Dendritic cell treated with granulocyte-macrophage colony-stimulating factor and Interleukin-4, amounts not matched to agents 40 ng/mL and 50 ng/mL, for 4 days (primary cell): ENCODE measurements at regions of chr3 and their contacts with region 1.

Region 1: GRCh38 chr3:113745273-113746068 is 578 bp downstream of the NAA50 start:
- H3K4me3 Mint-ChIP-seq: peak overlapping the region; percentile 85
- H3K27ac Mint-ChIP-seq: peak overlapping the region; percentile 100
- H3K4me1 Mint-ChIP-seq: peaks cover 59% of the 10 kb centered on the region
- H3K27me3 Mint-ChIP-seq: no peaks in the 10 kb centered on the region

Region 2: DNA sequence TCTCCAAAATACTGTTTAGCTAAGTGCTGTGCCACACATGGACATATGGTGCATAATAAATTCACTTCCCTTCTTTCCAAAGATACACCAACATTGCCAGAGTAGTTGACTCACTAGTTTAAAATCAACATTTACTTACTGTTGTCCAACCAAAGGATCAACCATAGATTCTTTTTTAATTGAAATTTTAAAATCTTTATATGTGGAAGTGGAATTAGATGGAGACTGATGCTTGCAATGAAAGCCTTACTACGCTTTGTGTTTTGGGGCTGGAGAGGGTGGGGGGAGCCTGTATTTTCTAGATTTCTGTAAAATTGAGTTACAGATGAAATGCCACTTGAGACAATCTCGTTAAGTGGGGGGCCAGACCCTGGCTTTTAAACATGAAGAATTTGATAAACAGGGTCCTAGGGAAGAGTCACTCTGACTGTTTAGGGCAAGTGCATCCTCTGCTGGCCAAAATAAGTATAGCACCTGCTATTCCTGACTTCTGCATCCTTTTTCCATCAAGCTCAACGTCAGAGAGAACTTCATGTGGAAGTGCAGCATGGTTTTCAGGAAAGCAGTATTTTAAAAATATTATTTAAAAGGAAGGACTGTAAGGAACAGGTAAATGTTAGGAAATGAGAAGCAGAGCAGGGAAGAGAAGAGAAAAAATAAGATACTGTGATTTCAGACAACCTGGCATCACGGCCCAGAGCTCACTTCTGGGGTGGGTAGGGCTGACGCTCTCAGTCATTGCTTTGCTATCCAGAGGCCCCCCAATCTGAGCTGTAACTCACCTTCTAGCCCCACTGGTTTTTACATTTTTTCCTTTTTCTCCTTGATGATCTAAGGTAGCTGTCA is 457.4 kb before region 1 on chr3:
- intact Hi-C with region 1: loop called (anchors 5 kb)
- H3K4me3 Mint-ChIP-seq: no peak overlapping the region
- H3K27ac Mint-ChIP-seq: no peak overlapping the region
- H3K4me1 Mint-ChIP-seq: peaks cover 8% of the 10 kb centered on the region
- H3K27me3 Mint-ChIP-seq: no peaks in the 10 kb centered on the region

Region 3: DNA sequence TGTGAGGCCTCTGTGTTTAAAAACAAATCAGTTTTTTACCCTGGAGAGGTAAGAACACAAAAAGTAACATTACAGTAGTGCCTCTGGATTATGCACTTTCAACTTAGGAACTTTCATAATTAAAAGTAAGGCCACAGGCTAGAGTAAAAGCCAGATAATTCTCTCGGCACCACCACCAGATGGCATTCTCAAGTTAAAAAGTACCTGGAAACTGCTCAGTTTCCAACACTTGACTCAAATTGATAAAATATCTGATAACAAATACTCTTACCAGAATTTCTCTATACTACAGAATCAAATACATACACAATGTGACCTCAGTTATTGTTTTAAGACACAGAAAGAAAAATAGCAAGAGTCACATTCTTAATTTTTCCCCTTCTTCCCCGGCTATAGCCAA is 250.4 kb before region 1 on chr3:
- intact Hi-C with region 1: loop called (anchors 2 kb)
- H3K4me3 Mint-ChIP-seq: no peak overlapping the region
- H3K27ac Mint-ChIP-seq: no peak overlapping the region
- H3K4me1 Mint-ChIP-seq: no peaks in the 10 kb centered on the region
- H3K27me3 Mint-ChIP-seq: no peaks in the 10 kb centered on the region

Region 4: DNA sequence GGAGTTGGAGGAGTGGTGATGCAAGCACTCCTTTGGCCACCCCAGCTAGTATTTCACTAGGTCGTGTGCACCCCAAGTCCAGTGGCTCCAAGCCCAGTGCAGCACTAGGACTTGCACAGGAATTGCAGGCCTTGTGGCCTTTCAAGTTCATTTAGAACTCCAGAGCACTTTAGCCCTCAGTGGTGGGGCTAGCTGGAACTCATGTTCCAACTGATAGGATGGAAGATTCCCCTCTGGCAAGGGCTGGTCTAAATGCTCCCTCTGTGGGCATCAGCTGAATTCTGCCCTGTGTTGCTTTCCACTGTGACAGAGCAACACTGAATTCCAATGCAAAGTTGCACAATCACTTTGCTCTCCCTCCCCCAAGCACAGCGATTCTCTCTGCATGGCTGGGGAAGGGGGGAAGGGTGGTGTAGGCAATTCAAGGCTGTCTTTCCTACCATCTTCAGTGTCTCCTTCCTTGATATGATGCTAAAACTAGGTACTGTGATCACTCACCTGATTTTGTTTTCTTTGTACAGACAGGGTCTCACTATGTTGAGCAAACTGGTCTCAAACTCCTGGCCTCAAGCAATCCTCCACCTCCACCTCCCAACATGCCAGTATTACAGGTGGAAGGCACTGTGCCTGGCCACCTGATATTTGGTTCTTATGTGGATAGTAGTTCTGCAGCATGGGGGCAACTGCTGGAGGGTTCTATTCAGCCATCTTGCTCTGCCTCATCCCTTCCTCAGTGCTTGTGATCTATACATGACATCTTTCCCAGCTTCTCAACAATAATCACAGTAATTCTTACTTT is 59.3 kb before region 1 on chr3:
- intact Hi-C with region 1: no loop called
- H3K4me3 Mint-ChIP-seq: no peak overlapping the region
- H3K27ac Mint-ChIP-seq: no peak overlapping the region
- H3K4me1 Mint-ChIP-seq: peaks cover 31% of the 10 kb centered on the region
- H3K27me3 Mint-ChIP-seq: no peaks in the 10 kb centered on the region

Region 5: GRCh38 chr3:113696658-113697499 is 48.6 kb before region 1 on chr3:
- intact Hi-C with region 1: loop called (anchors 1 kb)
- H3K4me3 Mint-ChIP-seq: no peak overlapping the region
- H3K27ac Mint-ChIP-seq: no peak overlapping the region
- H3K4me1 Mint-ChIP-seq: peaks cover 33% of the 10 kb centered on the region
- H3K27me3 Mint-ChIP-seq: peaks cover 8% of the 10 kb centered on the region

Region 6: DNA sequence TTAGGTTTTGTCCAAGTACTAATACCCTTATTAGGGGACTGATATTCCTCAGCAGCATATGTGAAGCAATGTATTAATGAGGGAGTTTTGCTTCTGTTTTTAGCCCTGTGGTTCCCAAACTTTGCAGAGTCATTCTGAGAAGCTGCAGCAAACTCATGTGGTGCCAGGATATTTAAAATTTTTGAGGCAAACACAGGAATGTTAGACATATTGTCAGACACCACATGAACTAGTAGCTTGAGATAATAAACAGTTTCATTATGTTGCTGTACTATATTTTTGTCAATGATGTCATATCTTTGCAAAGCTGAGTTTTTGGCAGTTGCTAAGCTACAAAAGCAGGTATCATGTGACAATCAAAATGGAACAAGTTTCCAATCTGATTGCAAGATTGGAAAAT is 38.0 kb after region 1 on chr3:
- intact Hi-C with region 1: loop called (anchors 1 kb)
- H3K4me3 Mint-ChIP-seq: no peak overlapping the region
- H3K27ac Mint-ChIP-seq: peak overlapping the region; percentile 67
- H3K4me1 Mint-ChIP-seq: no peaks in the 10 kb centered on the region
- H3K27me3 Mint-ChIP-seq: no peaks in the 10 kb centered on the region

Region 7: DNA sequence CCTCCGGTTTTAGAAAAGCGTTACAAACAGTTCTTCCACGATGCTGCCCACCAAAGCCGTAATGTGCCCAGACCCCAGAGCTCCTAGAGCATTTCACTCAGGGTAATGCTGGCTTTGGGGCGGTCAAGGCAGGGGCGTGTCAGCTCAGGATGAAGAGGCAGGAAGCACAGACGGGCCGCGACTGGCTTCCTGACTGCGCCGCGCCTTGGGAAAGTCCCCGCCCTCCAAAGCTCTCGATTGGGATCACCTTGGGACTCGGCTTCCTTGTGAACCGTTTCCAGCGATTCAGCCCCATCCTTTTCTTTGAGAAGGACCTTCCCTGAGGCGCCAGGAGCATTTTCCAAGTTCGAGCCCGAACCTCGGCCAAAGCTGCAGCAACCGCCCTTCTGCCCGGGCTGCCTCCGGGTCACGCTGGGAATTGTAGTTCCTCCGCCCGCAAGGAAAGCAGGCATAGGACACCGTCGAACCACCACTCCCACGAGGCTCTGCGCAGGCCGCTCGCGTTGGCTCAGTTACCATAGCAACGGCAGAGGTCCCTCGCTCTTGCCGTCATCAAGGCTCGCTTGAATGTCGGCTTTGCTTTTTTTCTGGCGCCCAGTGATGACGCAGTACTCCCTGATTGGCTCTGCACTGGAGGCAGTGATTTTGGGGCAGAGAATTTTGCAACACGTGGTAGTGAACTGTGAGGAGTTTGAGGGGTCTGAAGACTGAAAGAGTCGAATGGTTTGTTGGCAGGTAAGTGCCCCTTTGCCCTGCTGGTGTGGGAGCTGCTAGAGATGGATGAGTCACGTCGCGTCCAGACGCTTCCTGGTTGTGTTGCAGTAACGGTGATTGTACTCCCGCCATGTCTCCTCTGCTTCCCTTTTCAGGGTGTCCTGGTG is 310.9 kb after region 1 on chr3 and contains the starts of genes CCDC191 and QTRT2:
- intact Hi-C with region 1: loop called (anchors 2 kb)
- H3K4me3 Mint-ChIP-seq: peak within 1 kb of the TSS; percentile 92
- H3K27ac Mint-ChIP-seq: peak within 1 kb of the TSS; percentile 97
- H3K4me1 Mint-ChIP-seq: peaks cover 41% of the 10 kb centered on the region
- H3K27me3 Mint-ChIP-seq: no peaks in the 10 kb centered on the region

Region 8: GRCh38 chr3:115147329-115148141 is 1402.1 kb after region 1 on chr3:
- intact Hi-C with region 1: loop called (anchors 10 kb)
- H3K4me3 Mint-ChIP-seq: peak overlapping the region; percentile 97
- H3K27ac Mint-ChIP-seq: peak overlapping the region; percentile 97
- H3K4me1 Mint-ChIP-seq: peaks cover 5% of the 10 kb centered on the region
- H3K27me3 Mint-ChIP-seq: no peaks in the 10 kb centered on the region